H1 (cell line): ENCODE measurements at regions of chr10 and their contacts with region 1.

Region 1: DNA sequence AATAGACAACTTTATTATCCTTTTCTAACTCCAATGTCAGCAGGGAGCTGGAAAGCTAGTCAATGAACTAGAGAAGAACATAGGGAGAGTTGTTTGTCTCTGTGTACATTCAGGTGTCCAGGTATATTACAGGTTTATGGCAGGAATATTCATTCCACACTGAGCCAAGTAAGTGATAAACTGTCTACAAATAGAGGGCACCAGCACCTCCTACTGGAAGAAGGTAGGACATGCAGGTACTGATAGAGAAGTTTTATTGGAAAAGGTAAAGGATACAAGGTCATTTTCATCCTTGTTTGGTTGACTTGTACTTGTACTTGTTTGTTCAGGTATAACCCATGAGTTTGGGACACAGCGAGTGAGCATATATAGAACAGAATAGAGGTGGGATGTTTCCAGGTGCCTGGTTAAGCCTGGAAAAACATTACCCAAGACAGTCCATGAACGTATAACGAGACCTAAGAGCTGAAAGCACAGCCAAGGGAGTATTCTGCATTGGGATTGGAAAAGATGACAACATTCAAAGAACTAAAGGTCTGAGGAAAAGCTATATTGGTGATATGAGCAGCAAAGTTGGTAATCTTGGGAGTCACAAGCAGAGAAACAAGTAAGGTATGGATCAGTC is 61.4 kb upstream of the PPP1R3C start:
- DNase-seq: no peak
- H3K4me3 ChIP-seq: no peak overlapping the region
- H3K27ac ChIP-seq: no peak overlapping the region
- H3K4me1 ChIP-seq: no peaks in the 10 kb centered on the region
- H3K27me3 ChIP-seq: no peaks in the 10 kb centered on the region
- CTCF ChIP-seq: peak in 2 of 3 experiments; percentile 63 to 88; a peak in 3 of 4 replicates
- EP300 ChIP-seq: no peak
- POLR2A ChIP-seq: no peak
- RAD21 ChIP-seq: peak; percentile 85 to 87

Region 2: GRCh38 chr10:91551856-91552255 is 142.4 kb before region 1 on chr10:
- CTCF ChIA-PET with region 1: interaction called, 22 read pairs
- POLR2A ChIA-PET with region 1: no interaction called
- DNase-seq: peak; percentile 66 to 76
- H3K4me3 ChIP-seq: no peak overlapping the region; a peak in 1 of 8 replicates
- H3K27ac ChIP-seq: no peak overlapping the region
- H3K4me1 ChIP-seq: no peaks in the 10 kb centered on the region; a peak in 2 of 7 replicates
- H3K27me3 ChIP-seq: no peaks in the 10 kb centered on the region
- CTCF ChIP-seq: peak; percentile 91 to 99 (median 98)
- EP300 ChIP-seq: no peak
- POLR2A ChIP-seq: no peak
- RAD21 ChIP-seq: peak; percentile 89 to 91

Region 3: DNA sequence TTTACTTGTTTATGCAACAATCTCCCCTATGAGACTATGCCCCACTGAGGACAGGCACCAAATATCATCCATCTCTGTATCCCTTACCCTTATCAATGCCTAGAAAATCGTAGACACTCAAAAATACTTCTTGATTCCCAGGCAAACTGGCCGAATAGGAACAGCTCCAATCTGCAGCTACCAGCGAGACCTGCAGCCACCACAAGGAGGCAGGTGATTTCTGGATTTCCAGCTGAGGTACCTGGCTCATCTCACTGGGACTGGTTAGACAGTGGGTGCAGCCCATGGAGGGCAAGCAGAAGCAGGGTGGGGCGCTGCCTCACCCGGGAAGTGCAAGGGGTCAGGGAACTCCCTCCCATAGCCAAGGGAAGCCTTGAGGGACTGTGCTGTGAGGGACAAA is 50.6 kb before region 1 on chr10:
- CTCF ChIA-PET with region 1: interaction called, 45 read pairs
- POLR2A ChIA-PET with region 1: no interaction called
- DNase-seq: peak in 1 of 2 experiments; percentile 51
- H3K4me3 ChIP-seq: no peak overlapping the region
- H3K27ac ChIP-seq: no peak overlapping the region
- H3K4me1 ChIP-seq: no peaks in the 10 kb centered on the region
- H3K27me3 ChIP-seq: no peaks in the 10 kb centered on the region
- CTCF ChIP-seq: peak; percentile 63 to 71 (median 65)
- EP300 ChIP-seq: no peak
- POLR2A ChIP-seq: no peak
- RAD21 ChIP-seq: peak; percentile 55 to 66

Region 4: GRCh38 chr10:91659887-91660286 is 34.4 kb before region 1 on chr10:
- CTCF ChIA-PET with region 1: interaction called, 15 read pairs
- POLR2A ChIA-PET with region 1: interaction called, 3 read pairs
- DNase-seq: no peak
- H3K4me3 ChIP-seq: no peak overlapping the region
- H3K27ac ChIP-seq: no peak overlapping the region
- H3K4me1 ChIP-seq: no peaks in the 10 kb centered on the region
- H3K27me3 ChIP-seq: no peaks in the 10 kb centered on the region
- CTCF ChIP-seq: no peak
- EP300 ChIP-seq: no peak
- POLR2A ChIP-seq: no peak
- RAD21 ChIP-seq: no peak

Region 5: GRCh38 chr10:91683975-91684374 is 10.3 kb before region 1 on chr10:
- CTCF ChIA-PET with region 1: interaction called, 67 read pairs
- POLR2A ChIA-PET with region 1: no interaction called
- DNase-seq: peak in 1 of 2 experiments; percentile 36
- H3K4me3 ChIP-seq: 0 out of 8 replicates have a peak overlapping the region, but pooled peaks of 1 of the 4 experiments have one; percentile 1
- H3K27ac ChIP-seq: no peak overlapping the region
- H3K4me1 ChIP-seq: peaks cover 4 to 20% (median 6%) of the 10 kb centered on the region in 4 experiments
- H3K27me3 ChIP-seq: no peaks in the 10 kb centered on the region
- CTCF ChIP-seq: no peak
- EP300 ChIP-seq: no peak
- POLR2A ChIP-seq: no peak
- RAD21 ChIP-seq: no peak

Region 6: GRCh38 chr10:91713461-91714072 is 19.3 kb after region 1 on chr10:
- CTCF ChIA-PET with region 1: interaction called, 26 read pairs
- POLR2A ChIA-PET with region 1: interaction called, 4 read pairs
- DNase-seq: no peak
- H3K4me3 ChIP-seq: no peak overlapping the region
- H3K27ac ChIP-seq: no peak overlapping the region
- H3K4me1 ChIP-seq: no peaks in the 10 kb centered on the region
- H3K27me3 ChIP-seq: no peaks in the 10 kb centered on the region
- CTCF ChIP-seq: no peak
- EP300 ChIP-seq: no peak
- POLR2A ChIP-seq: no peak
- RAD21 ChIP-seq: no peak

Region 7: DNA sequence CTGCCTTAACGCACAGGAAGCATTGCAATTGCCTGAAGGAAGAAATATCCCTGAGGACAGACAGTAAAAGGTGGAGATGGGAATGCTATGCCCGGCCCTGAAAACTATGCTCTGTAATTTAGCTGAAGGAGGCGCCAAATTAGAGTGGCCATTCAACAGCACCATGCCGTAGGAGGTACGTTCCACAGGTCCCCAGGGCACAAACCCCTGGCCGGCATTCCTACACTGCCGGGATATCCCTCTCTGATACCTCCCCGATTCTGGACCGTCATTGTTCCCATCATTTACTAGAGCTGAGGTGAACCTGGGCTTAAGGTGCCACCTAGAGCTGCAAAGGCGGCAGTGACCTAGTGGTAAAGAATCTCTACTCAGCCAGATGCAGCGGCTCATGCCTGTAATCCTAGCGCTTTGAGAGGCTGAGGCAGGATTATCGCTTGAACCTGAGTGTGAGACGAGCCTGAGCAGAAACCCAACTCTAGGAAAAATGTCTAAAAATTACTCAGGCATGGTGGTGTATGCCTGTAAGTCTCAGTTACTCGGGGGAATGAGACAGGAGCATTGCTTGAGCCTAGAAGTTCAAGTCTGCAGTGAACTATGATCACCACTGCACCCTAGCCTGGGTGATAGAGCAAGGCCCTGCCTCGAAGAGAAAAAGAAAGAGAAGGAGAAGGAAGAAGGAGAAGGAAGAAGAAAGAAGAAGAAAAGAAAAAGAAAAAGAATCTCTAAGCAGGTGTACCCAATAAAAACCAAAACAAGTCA is 51.0 kb after region 1 on chr10:
- CTCF ChIA-PET with region 1: interaction called, 15 read pairs
- POLR2A ChIA-PET with region 1: interaction called, 3 read pairs
- DNase-seq: peak; percentile 60 to 61
- H3K4me3 ChIP-seq: peak overlapping the region in 2 of 4 experiments; percentile 19 to 24; a peak in 2 of 8 replicates
- H3K27ac ChIP-seq: no peak overlapping the region
- H3K4me1 ChIP-seq: peaks cover 0 to 4% (median 1%) of the 10 kb centered on the region in 4 experiments; a peak in 1 of 7 replicates
- H3K27me3 ChIP-seq: no peaks in the 10 kb centered on the region
- CTCF ChIP-seq: peak; percentile 63 to 91 (median 87)
- EP300 ChIP-seq: no peak
- POLR2A ChIP-seq: no peak
- RAD21 ChIP-seq: peak; percentile 95 to 97

Region 8: GRCh38 chr10:91758303-91759146 is 64.2 kb after region 1 on chr10:
- CTCF ChIA-PET with region 1: no interaction called
- POLR2A ChIA-PET with region 1: no interaction called
- DNase-seq: no peak
- H3K4me3 ChIP-seq: no peak overlapping the region
- H3K27ac ChIP-seq: no peak overlapping the region
- H3K4me1 ChIP-seq: no peaks in the 10 kb centered on the region
- H3K27me3 ChIP-seq: no peaks in the 10 kb centered on the region
- CTCF ChIP-seq: peak in 2 of 3 experiments; percentile 64 to 66; a peak in 2 of 4 replicates
- EP300 ChIP-seq: no peak
- POLR2A ChIP-seq: no peak
- RAD21 ChIP-seq: peak; percentile 93 to 95